Activated CD8-positive, alpha-beta T cell treated with anti-CD3 and anti-CD28 coated beads, Interleukin-2, amount 10 ng/mL, durations not matched to agents 7 days and 5 days (primary cell): ENCODE measurements at regions of chr3 and their contacts with region 1.

Region 1: GRCh38 chr3:59052803-59053411 is 3.1 kb upstream of the CFAP20DC start:
- DNase-seq: peak; percentile 46
- ATAC-seq: no peak
- H3K4me3 Mint-ChIP-seq: no peak overlapping the region
- H3K27ac Mint-ChIP-seq: no peak overlapping the region
- H3K4me1 Mint-ChIP-seq: peaks cover 12% of the 10 kb centered on the region
- H3K27me3 Mint-ChIP-seq: no peaks in the 10 kb centered on the region

Region 2: DNA sequence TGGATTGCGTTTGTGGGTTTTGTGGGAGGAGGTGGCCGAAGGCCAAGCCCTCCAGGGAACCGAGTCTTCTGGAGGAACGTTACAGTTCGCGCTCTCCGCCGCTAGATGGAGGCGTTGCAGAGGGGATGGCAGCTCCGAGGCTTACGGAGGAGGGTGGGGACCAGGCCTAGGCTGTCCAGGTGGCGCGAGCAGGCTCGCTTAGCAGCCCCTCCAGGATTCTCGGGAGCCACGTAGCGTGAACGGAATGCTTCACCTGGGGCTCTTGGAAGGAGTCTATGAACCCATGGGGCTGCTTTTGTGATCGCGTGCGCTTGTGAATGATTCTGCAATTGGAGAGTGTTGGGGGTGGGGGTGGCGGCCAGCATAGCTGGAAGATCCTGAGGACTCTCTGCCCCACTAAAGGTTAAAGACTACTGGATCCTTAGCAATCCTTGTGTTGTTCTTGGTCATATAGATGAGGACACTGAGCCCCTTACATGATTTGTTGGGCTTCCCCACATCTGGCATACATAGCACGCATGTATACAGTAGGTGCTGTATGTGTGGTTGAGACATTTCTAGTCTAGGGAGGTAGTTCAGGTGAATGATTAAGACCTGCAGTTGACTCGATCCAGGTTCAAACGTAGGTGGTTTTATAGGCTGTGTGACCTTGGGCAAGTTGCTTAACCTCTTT is 412.1 kb before region 1 on chr3:
- CTCF ChIA-PET with region 1: interaction called, 28 read pairs
- POLR2A ChIA-PET with region 1: no interaction called
- DNase-seq: peak; percentile 67
- ATAC-seq: peak; percentile 91
- H3K4me3 Mint-ChIP-seq: no peak overlapping the region
- H3K27ac Mint-ChIP-seq: no peak overlapping the region
- H3K4me1 Mint-ChIP-seq: no peaks in the 10 kb centered on the region
- H3K27me3 Mint-ChIP-seq: no peaks in the 10 kb centered on the region

Region 3: DNA sequence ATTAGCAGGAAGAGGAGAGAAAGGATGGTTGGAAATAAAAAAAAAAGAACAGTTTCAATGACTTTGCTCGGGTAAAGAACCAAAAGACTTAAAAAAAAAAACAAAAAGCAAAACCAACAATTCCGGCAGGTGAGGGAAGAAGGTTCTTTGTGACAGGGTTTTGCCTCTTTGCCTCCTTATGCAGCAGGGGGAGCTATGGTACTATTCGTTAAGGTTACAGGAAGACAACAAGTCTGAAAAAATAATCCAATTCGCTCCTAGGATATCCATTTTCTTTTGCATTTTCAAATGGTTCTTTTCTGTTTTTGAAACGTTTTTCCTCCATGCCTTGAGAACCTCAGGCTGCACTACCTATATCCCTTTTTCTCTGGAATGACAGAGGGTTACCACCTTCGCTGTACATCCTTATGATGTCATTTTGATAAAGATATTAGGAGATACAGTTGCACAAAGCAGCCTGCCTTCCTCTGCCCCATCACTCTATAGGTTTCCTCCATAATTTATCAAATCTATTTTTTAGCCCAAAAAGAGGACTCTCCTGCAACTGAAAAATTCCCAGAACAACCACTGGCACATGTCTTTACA is 58.1 kb before region 1 on chr3:
- CTCF ChIA-PET with region 1: interaction called, 13 read pairs
- POLR2A ChIA-PET with region 1: no interaction called
- DNase-seq: peak; percentile 64
- ATAC-seq: peak; percentile 68
- H3K4me3 Mint-ChIP-seq: no peak overlapping the region
- H3K27ac Mint-ChIP-seq: no peak overlapping the region
- H3K4me1 Mint-ChIP-seq: no peaks in the 10 kb centered on the region
- H3K27me3 Mint-ChIP-seq: peaks cover 9% of the 10 kb centered on the region